ENCODE measurements at regions of chr16 and their contacts with region 1.

Region 1: GRCh38 chr16:46673320-46674013 is 15.5 kb downstream of the VPS35 start:
- DNase-seq: peak; percentile 57
- H3K4me3 Mint-ChIP-seq: no peak overlapping the region
- H3K27ac Mint-ChIP-seq: no peak overlapping the region
- H3K4me1 Mint-ChIP-seq: peaks cover 8% of the 10 kb centered on the region
- H3K27me3 Mint-ChIP-seq: no peaks in the 10 kb centered on the region
- CTCF ChIP-seq: peak; percentile 84

Region 2: GRCh38 chr16:46621006-46621933 is 52.2 kb before region 1 on chr16 and contains the start of gene SHCBP1:
- CTCF ChIA-PET with region 1: no interaction called
- intact Hi-C with region 1: loop called (anchors 5 kb)
- DNase-seq: peak; percentile 93
- H3K4me3 Mint-ChIP-seq: peak within 1 kb of the TSS; percentile 100
- H3K27ac Mint-ChIP-seq: peak within 1 kb of the TSS; percentile 97
- H3K4me1 Mint-ChIP-seq: peaks cover 35% of the 10 kb centered on the region
- H3K27me3 Mint-ChIP-seq: no peaks in the 10 kb centered on the region
- CTCF ChIP-seq: no peak
- total RNA-seq, gene SHCBP1: 43.2 and 54.8 TPM in 2 replicates

Region 3: DNA sequence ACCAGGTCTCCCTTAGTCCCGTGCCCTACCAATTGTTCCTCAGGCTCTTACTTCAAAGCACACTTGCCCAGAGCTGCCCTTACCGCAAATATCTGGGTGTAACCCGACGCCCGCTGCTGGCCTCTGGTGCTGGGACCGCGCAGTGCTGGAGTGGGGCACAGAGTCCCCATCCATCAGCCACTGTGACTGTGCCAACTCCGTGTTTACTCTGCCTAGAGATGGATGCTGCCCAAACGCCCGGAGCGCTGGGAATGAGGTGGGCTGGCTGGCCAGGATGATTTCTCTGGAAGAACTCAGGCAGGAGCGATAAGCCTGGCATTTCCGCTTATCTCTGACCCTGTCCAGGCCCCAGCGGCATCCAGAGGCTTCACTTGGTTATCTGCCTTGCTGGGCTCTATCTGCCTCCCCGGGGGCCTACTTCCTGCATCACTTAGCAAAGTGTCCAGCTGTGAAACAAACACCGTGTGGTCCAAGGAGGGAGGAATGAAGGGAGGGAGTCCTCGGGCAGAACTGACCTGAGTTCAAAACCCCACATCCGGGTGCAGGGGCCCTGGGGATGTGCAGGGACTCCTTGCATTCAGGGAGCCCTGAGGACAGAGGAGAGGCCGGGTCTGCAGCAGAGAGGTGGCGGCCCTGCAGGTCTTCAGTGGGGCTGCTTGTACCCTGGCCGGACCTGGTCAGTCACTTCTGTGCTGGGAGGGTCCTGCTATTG is 84.0 kb after region 1 on chr16:
- CTCF ChIA-PET with region 1: no interaction called
- intact Hi-C with region 1: no loop called
- DNase-seq: peak; percentile 48
- H3K4me3 Mint-ChIP-seq: no peak overlapping the region
- H3K27ac Mint-ChIP-seq: no peak overlapping the region
- H3K4me1 Mint-ChIP-seq: peaks cover 8% of the 10 kb centered on the region
- H3K27me3 Mint-ChIP-seq: peaks cover 61% of the 10 kb centered on the region
- CTCF ChIP-seq: peak; percentile 14

Region 4: DNA sequence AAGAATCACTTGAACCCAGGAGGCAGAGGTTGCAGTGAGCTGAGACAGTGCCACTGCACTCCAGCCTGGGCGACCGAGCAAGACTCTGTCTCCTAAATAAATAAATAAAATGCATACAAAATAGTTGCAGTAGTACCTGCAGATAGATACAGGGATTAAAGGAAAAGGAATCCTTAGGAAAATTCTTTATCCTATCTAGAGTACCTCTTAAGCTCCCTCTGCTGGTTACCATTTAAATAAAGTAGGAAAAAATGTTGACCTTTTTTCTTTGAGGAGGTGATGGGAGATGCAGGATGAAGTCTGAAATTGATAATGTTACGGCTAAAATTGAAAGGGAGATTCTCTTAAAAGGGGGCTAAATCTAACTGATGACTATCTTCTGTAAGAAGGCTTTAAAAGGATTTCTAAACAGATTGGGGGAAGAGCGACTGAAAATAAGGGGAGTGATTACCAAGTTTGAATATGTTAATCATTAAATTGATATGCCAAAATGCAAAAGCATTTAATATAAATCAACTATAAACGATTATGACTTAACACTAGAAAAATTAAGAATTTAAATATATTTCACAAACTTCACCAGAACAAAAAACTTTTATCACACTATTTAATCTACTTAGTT is 128.1 kb after region 1 on chr16:
- CTCF ChIA-PET with region 1: interaction called, 8 read pairs
- intact Hi-C with region 1: loop called (anchors 1 kb)
- DNase-seq: no peak
- H3K4me3 Mint-ChIP-seq: no peak overlapping the region
- H3K27ac Mint-ChIP-seq: peak overlapping the region; percentile 1
- H3K4me1 Mint-ChIP-seq: peaks cover 8% of the 10 kb centered on the region
- H3K27me3 Mint-ChIP-seq: no peaks in the 10 kb centered on the region
- CTCF ChIP-seq: peak; percentile 38

Region 5: DNA sequence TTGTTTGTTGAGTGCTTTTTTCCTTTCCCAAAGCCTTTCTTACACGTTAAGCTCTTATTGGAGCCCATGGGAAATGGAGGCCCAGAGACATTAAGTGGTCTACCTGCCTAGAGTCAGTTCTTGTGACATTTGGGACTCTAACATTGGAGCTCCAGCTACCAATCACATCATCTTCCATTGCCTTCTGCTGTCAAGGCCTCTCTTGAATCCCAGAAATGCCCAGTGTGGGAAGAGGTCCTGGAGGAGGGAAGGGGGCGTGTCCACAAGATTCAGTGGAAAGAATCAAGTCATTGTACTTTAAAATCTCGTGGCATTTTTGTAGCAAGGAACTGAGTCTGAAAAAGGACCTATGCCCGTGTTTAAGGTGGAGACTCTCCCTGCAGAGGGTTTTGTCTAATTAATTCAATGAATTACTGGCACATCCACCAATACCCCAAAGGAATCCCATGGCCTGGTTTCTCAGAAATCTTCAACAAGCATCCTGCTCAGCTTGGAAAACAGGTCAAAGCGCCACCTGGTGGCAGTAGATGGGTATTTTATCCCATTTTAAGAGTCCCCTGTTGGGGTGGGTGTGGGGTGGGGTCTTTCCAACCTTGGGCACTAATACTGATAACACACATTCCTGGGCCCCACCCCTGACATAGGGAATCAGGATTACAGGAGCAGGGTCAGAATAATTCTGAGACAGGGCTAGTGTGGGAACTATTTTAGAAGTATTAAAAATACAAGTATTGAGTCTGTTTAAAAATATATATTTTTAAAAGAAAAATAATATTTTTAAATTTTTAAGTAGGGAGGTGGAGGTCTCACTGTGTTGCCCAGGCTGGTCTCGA is 235.3 kb after region 1 on chr16:
- CTCF ChIA-PET with region 1: interaction called, 9 read pairs
- intact Hi-C with region 1: loop called (anchors 5 kb)
- DNase-seq: peak; percentile 72
- H3K4me3 Mint-ChIP-seq: no peak overlapping the region
- H3K27ac Mint-ChIP-seq: no peak overlapping the region
- H3K4me1 Mint-ChIP-seq: peaks cover 9% of the 10 kb centered on the region
- H3K27me3 Mint-ChIP-seq: no peaks in the 10 kb centered on the region
- CTCF ChIP-seq: peak; percentile 82